ENCODE measurements at regions of chr7 and their contacts with region 1.

Region 1: GRCh38 chr7:55280031-55280454 is 85.1 kb upstream of the LANCL2 start:
- DNase-seq: peak; percentile 24 to 70 (median 44)
- ATAC-seq: peak; percentile 94
- H3K4me3 ChIP-seq: no peak overlapping the region
- H3K27ac ChIP-seq: no peak overlapping the region
- H3K4me1 ChIP-seq: no peaks in the 10 kb centered on the region
- H3K27me3 ChIP-seq: peaks cover 0 to 6% of the 10 kb centered on the region in 2 experiments; a peak in 2 of 5 replicates
- CTCF ChIP-seq: peak; percentile 64 to 85 (median 72)
- EP300 ChIP-seq: no peak
- POLR2A ChIP-seq: no peak
- RAD21 ChIP-seq: peak; percentile 83 to 84

Region 2: DNA sequence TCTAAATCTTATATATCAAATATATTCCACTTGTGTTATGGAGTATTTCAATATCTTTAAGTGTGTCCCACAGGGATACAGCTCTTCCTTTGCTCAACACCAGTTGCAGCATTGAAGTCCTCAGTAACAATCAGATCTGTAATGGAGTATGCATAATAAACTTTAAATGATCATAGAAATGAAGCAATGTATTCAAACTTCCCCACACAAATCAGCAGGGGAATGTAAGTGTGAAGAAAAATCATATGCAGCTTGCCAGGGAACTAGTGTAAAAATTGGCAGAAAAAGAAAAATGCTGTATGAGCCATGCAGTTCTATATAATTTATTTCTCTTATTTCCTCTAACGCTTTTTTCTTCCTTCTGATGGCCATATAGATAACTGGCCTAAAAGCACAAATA is 1182.2 kb before region 1 on chr7:
- CTCF ChIA-PET with region 1: no interaction called
- POLR2A ChIA-PET with region 1: no interaction called
- in situ Hi-C with region 1: no loop called
- intact Hi-C with region 1: no loop called
- DNase-seq: no peak
- ATAC-seq: no peak
- H3K4me3 ChIP-seq: no peak overlapping the region
- H3K27ac ChIP-seq: no peak overlapping the region
- H3K4me1 ChIP-seq: no peaks in the 10 kb centered on the region
- H3K27me3 ChIP-seq: no peaks in the 10 kb centered on the region
- CTCF ChIP-seq: no peak
- EP300 ChIP-seq: no peak
- POLR2A ChIP-seq: no peak
- RAD21 ChIP-seq: no peak

Region 3: DNA sequence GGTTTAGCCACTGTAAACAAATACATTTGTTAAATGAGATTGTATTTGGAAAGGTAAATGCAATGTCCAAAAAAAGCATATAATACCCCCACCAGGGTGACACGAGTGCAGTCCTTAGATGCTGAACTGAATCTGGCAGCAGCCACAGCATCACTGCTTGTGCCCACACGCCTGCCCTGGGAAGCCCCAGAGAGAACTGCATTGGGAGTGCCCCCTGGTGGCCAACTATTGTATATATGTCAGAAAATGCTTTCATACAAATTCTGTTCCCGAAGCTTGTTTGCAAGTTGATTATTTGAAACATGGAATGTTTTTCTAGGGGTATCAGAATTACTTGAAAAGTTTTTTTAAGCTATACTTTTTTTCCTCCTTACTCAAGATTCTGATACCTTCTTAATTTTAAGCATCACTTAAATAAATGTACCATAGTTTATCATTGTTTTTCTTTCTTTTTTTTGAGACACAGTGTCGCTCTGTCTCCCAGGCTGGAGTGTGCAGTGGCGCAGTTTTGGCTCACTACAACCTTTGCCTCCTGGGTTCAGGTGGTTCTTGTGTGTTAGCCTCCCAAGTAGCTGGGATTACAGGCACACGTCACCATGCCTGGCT is 135.2 kb after region 1 on chr7:
- CTCF ChIA-PET with region 1: interaction called, 34 read pairs
- POLR2A ChIA-PET with region 1: no interaction called
- in situ Hi-C with region 1: no loop called
- intact Hi-C with region 1: loop called (anchors 1 kb)
- DNase-seq: peak; percentile 69 to 79 (median 72)
- ATAC-seq: peak; percentile 93
- H3K4me3 ChIP-seq: no peak overlapping the region
- H3K27ac ChIP-seq: no peak overlapping the region
- H3K4me1 ChIP-seq: 0 out of 5 replicates have a peak, but pooled peaks cover 0 to under 1% of the 10 kb centered on the region in 2 experiments
- H3K27me3 ChIP-seq: no peaks in the 10 kb centered on the region
- CTCF ChIP-seq: peak; percentile 73 to 78 (median 77)
- EP300 ChIP-seq: no peak
- POLR2A ChIP-seq: no peak
- RAD21 ChIP-seq: peak; percentile 73 to 75